MCF 10A (cell line): ENCODE measurements at regions of chr16 and their contacts with region 1.

Region 1: GRCh38 chr16:46947900-46948547 is 25.4 kb downstream of the DNAJA2 start:
- DNase-seq: peak; percentile 57
- H3K4me3 Mint-ChIP-seq: no peak overlapping the region
- H3K27ac Mint-ChIP-seq: no peak overlapping the region
- H3K4me1 Mint-ChIP-seq: no peaks in the 10 kb centered on the region
- H3K27me3 Mint-ChIP-seq: no peaks in the 10 kb centered on the region
- CTCF ChIP-seq: peak; percentile 61

Region 2: DNA sequence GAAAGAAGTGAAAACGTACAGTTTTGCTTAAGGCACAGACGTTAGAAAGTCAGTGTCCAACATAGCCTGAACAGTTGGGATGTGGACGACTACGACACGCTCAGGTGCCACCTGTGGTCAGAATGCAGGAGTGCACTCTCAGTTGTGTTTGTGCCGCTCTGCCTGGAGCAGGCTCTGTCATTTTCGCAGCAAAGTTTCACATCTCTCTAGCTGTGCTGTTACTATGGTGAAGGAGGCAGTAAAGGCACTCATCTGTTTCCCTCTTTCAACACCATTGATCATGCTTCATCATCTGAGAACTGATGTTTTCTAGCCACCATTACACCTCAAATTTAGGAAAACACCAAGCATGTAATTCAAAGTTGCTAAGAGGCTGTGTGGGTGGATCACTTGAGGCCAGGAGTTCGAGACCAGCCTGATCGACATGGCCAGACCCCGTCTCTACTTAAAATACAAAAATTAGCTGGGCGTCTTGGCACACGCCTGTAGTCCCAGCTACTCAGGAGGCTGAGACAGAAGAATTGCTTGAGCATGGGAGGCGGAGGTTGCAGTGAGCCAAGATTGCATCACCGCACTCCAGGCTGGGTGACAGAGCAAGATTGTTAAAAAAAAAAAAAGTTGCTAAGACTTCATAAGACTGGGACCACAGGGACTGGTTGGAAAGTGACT is 70.3 kb after region 1 on chr16:
- CTCF ChIA-PET with region 1: interaction called, 14 read pairs
- POLR2A ChIA-PET with region 1: no interaction called
- intact Hi-C with region 1: loop called (anchors 1 kb)
- DNase-seq: peak; percentile 61
- H3K4me3 Mint-ChIP-seq: no peak overlapping the region
- H3K27ac Mint-ChIP-seq: no peak overlapping the region
- H3K4me1 Mint-ChIP-seq: no peaks in the 10 kb centered on the region
- H3K27me3 Mint-ChIP-seq: no peaks in the 10 kb centered on the region
- CTCF ChIP-seq: peak; percentile 37